ENCODE measurements at regions of chr17 and their contacts with region 1.

Region 1: GRCh38 chr17:43940630-43941029 is 1.6 kb downstream of the PPY start:
- DNase-seq: no peak
- H3K4me3 ChIP-seq: no peak overlapping the region
- H3K27ac ChIP-seq: no peak overlapping the region
- H3K4me1 ChIP-seq: peaks cover 9% of the 10 kb centered on the region
- H3K27me3 ChIP-seq: no peaks in the 10 kb centered on the region
- CTCF ChIP-seq: peak; percentile 40 to 45

Region 2: GRCh38 chr17:43878260-43879175 is 62.1 kb before region 1 on chr17:
- CTCF ChIA-PET with region 1: interaction called, 3 read pairs
- dilution Hi-C with region 1: no loop called
- in situ Hi-C with region 1: no loop called
- intact Hi-C with region 1: loop called (anchors 1 kb)
- DNase-seq: peak; percentile 76
- H3K4me3 ChIP-seq: no peak overlapping the region
- H3K27ac ChIP-seq: no peak overlapping the region
- H3K4me1 ChIP-seq: peaks cover 4% of the 10 kb centered on the region
- H3K27me3 ChIP-seq: no peaks in the 10 kb centered on the region
- CTCF ChIP-seq: peak; percentile 93 to 99

Region 3: GRCh38 chr17:43911904-43912303 is 28.7 kb before region 1 on chr17:
- CTCF ChIA-PET with region 1: interaction called, 7 read pairs
- dilution Hi-C with region 1: no loop called
- in situ Hi-C with region 1: no loop called
- intact Hi-C with region 1: loop called (anchors 2 kb)
- DNase-seq: no peak
- H3K4me3 ChIP-seq: no peak overlapping the region
- H3K27ac ChIP-seq: no peak overlapping the region
- H3K4me1 ChIP-seq: peaks cover 8% of the 10 kb centered on the region
- H3K27me3 ChIP-seq: peaks cover 17% of the 10 kb centered on the region
- CTCF ChIP-seq: no peak

Region 4: GRCh38 chr17:44014437-44015172 is 74.0 kb after region 1 on chr17 and contains the start of gene TMEM101:
- CTCF ChIA-PET with region 1: interaction called, 11 read pairs
- dilution Hi-C with region 1: no loop called
- in situ Hi-C with region 1: no loop called
- intact Hi-C with region 1: no loop called
- DNase-seq: peak; percentile 83
- H3K4me3 ChIP-seq: peak within 1 kb of the TSS; percentile 89 to 99 (median 91)
- H3K27ac ChIP-seq: peak within 1 kb of the TSS; percentile 80
- H3K4me1 ChIP-seq: peaks cover 4% of the 10 kb centered on the region
- H3K27me3 ChIP-seq: no peaks in the 10 kb centered on the region
- CTCF ChIP-seq: no peak
- total RNA-seq, gene TMEM101: 24.4 to 39.0 TPM

Region 5: DNA sequence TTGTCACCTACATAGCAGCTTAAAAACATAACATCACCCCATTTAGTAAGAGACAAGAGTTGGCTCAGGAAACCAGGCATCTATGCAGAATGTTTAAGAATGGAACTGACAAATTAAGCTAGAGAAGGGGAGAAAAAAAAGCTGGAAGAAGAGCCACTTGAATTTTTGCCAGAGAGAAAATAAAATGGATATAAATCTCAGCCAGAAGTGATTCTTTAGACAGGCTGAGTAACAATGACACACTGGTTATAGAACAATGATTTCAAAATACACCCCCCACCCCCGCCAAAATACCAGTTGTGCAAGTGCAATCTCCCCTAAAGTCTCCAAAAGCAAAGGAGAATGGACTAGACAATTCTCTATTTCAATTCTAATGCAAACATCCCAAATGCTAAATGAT is 103.4 kb after region 1 on chr17:
- CTCF ChIA-PET with region 1: interaction called, 5 read pairs
- dilution Hi-C with region 1: no loop called
- in situ Hi-C with region 1: loop called in 1 of 2 experiments (anchors 5 kb)
- intact Hi-C with region 1: loop called (anchors 1 kb)
- DNase-seq: peak; percentile 33
- H3K4me3 ChIP-seq: no peak overlapping the region
- H3K27ac ChIP-seq: no peak overlapping the region
- H3K4me1 ChIP-seq: peaks cover 27% of the 10 kb centered on the region
- H3K27me3 ChIP-seq: no peaks in the 10 kb centered on the region
- CTCF ChIP-seq: no peak

Region 6: GRCh38 chr17:44061446-44061845 is 120.8 kb after region 1 on chr17:
- CTCF ChIA-PET with region 1: no interaction called
- dilution Hi-C with region 1: no loop called
- in situ Hi-C with region 1: no loop called
- intact Hi-C with region 1: no loop called
- DNase-seq: no peak
- H3K4me3 ChIP-seq: no peak overlapping the region
- H3K27ac ChIP-seq: no peak overlapping the region
- H3K4me1 ChIP-seq: peaks cover 5% of the 10 kb centered on the region
- H3K27me3 ChIP-seq: no peaks in the 10 kb centered on the region
- CTCF ChIP-seq: no peak

Region 7: GRCh38 chr17:44170499-44171201 is 230.0 kb after region 1 on chr17 and contains the start of gene ASB16:
- CTCF ChIA-PET with region 1: interaction called, 5 read pairs
- dilution Hi-C with region 1: no loop called
- in situ Hi-C with region 1: no loop called
- intact Hi-C with region 1: loop called (anchors 1 kb)
- DNase-seq: no peak
- H3K4me3 ChIP-seq: no peak within 1 kb of the TSS
- H3K27ac ChIP-seq: no peak within 1 kb of the TSS
- H3K4me1 ChIP-seq: peaks cover 5% of the 10 kb centered on the region
- H3K27me3 ChIP-seq: no peaks in the 10 kb centered on the region
- CTCF ChIP-seq: no peak
- total RNA-seq, gene ASB16: not detected

Measured in mammary epithelial cell (primary cell).